Activated CD8-positive, alpha-beta T cell treated with anti-CD3 and anti-CD28 coated beads, Interleukin-2, amount 10 ng/mL, durations not matched to agents 7 days and 5 days (primary cell): ENCODE measurements at regions of chr11 and their contacts with region 1.

Region 1: DNA sequence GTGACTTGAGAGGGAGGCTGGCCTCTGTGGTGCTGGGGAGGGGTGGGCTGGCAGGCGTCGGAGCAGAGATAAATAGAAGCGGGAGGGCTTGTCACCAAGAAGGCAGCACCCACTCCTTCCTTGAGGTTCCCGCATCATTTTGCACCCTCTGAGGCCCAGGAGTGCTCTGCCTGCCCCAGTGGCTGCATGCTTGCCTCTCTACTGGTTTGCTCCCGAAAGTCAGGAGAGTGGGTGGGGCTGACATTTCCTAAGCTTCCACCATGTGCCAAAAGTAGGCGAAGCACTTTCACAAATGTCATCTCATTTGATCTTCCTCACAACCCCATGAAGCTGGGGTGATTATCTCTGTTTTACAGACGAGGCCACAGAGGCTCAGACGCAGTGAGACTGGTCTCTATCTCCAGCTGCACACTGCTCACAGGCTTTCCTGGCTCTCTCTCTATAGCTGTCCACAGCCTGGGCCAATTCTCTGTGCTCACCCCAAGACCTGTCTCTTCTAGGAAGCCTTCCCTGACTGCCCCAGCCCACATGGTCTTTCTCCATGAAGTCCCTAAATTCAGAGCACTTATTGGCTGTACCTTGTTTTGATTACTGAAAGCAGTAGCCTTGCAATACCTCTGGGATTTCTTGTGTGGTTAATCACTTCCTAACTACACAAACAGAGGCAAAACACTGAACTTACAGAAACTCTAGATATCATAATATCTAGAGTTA is 2.6 kb upstream of the UCP3 start:
- DNase-seq: no peak
- ATAC-seq: peak; percentile 81
- H3K4me3 Mint-ChIP-seq: no peak overlapping the region
- H3K27ac Mint-ChIP-seq: peak overlapping the region; percentile 75
- H3K4me1 Mint-ChIP-seq: peaks cover 70% of the 10 kb centered on the region
- H3K27me3 Mint-ChIP-seq: no peaks in the 10 kb centered on the region

Region 2: GRCh38 chr11:73995247-73995646 is 16.3 kb before region 1 on chr11:
- CTCF ChIA-PET with region 1: interaction called, 7 read pairs
- POLR2A ChIA-PET with region 1: interaction called, 51 read pairs
- DNase-seq: peak; percentile 56
- ATAC-seq: peak; percentile 79
- H3K4me3 Mint-ChIP-seq: peak overlapping the region; percentile 72
- H3K27ac Mint-ChIP-seq: peak overlapping the region; percentile 94
- H3K4me1 Mint-ChIP-seq: peaks cover 70% of the 10 kb centered on the region
- H3K27me3 Mint-ChIP-seq: no peaks in the 10 kb centered on the region